IMR-90 (cell line): ENCODE measurements at regions of chr16 and their contacts with region 1.

Region 1: DNA sequence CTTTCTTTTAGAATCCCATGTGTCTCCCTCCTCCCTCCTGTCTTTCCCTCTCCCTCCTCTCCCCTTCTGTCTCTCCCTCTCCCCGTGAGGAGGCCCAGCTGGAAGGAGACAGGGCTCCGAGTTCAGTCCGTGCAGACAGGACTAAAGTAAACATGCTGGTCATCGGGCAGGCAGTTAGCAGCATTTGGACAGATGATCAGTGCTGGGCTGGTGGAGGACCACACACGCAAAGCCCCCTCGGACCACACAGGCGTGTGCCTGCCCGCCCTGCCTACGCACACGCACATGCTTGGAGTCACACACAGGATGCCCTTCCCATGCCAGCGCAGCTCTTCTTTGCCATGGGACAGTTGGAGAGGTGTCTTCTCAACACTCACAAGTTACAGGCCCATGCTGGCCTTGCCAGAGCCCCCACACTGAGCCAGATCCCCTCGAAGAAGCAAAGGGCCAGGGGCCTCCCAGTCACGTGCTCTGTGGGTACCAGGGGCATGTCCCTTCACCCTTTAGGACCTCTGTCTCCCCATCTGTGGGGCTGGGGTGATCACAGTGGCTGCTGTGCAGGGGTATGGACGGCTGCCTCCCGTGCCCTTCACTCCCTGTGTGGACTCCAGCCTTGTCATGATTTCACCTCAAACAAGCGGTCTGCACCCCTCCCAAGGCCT is 215.7 kb upstream of the FOXF1 start:
- DNase-seq: peak; percentile 98
- ATAC-seq: peak; percentile 71
- H3K4me3 ChIP-seq: no peak overlapping the region
- H3K27ac ChIP-seq: peak overlapping the region; percentile 85
- H3K4me1 ChIP-seq: peaks cover 50% of the 10 kb centered on the region
- H3K27me3 ChIP-seq: no peaks in the 10 kb centered on the region
- CTCF ChIP-seq: no peak
- POLR2A ChIP-seq: no peak; the same call in 1 of the 2 replicates
- RAD21 ChIP-seq: peak; percentile 40

Region 2: DNA sequence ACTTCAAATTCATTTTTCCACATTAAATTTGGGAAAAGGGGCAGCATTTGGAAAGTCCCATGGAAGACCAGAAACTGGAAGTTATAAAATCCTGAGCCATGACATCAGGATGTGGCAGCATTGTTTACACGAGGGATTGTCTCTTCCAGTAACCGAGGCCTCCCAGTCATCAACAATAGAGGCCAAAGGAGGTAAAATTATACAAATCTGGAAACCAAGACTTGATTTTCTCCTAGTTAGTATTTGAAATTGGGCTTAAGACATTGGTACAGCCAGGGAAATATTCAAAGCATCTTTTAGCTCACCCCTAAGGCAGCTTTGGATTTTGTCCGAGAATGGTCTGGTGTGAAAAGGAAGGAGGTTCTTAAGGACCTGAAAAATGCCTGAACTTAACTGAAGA is 36.0 kb before region 1 on chr16:
- CTCF ChIA-PET with region 1: no interaction called
- POLR2A ChIA-PET with region 1: interaction called, 3 read pairs
- dilution Hi-C with region 1: no loop called
- in situ Hi-C with region 1: no loop called
- intact Hi-C with region 1: loop called (anchors 2 kb)
- DNase-seq: peak; percentile 89
- ATAC-seq: peak; percentile 84
- H3K4me3 ChIP-seq: no peak overlapping the region
- H3K27ac ChIP-seq: peak overlapping the region; percentile 99
- H3K4me1 ChIP-seq: peaks cover 23% of the 10 kb centered on the region
- H3K27me3 ChIP-seq: no peaks in the 10 kb centered on the region
- CTCF ChIP-seq: no peak
- POLR2A ChIP-seq: no peak
- RAD21 ChIP-seq: no peak

Region 3: GRCh38 chr16:86664533-86665318 is 370.1 kb after region 1 on chr16:
- CTCF ChIA-PET with region 1: no interaction called
- POLR2A ChIA-PET with region 1: no interaction called
- dilution Hi-C with region 1: no loop called
- in situ Hi-C with region 1: no loop called
- intact Hi-C with region 1: no loop called
- DNase-seq: peak; percentile 98
- ATAC-seq: peak; percentile 74
- H3K4me3 ChIP-seq: no peak overlapping the region
- H3K27ac ChIP-seq: peak overlapping the region; percentile 77
- H3K4me1 ChIP-seq: peaks cover 29% of the 10 kb centered on the region
- H3K27me3 ChIP-seq: no peaks in the 10 kb centered on the region
- CTCF ChIP-seq: no peak
- POLR2A ChIP-seq: peak; percentile 4; the same call in 1 of the 2 replicates
- RAD21 ChIP-seq: peak; percentile 35; the same call in 1 of the 2 replicates